ENCODE measurements at regions of chr6 and their contacts with region 1.

Region 1: DNA sequence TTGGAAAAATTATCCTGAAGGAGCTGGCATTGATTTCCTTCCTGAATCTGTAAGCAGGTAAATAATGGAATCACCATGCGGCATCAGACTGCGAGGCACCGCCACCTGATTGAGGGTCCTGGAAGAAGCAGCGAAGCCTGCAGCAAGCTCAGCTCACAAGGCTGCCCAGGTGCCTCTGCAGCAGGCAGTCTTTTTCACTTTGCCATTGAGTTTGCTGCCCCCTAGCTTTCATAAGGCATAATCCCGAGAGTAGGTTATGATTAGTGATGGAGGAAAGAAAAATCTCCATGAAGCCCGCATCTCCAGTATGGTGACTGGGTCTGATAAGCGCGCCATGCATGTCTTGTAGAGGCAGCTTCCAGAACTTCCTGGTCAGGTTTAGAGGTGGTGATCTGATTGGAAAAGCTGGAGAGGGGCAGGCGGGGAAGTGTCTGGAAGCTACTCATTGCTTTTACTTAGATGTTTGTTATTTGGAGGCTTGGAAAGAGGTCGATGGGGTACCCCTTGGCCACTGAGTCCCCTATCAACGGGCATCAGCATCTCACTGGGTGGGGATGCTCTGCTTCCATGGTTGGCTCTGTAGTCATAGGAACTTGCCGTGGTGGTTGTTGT is 26.7 kb downstream of the IYD start:
- DNase-seq: peak; percentile 75
- H3K4me3 Mint-ChIP-seq: no peak overlapping the region
- H3K27ac Mint-ChIP-seq: no peak overlapping the region
- H3K4me1 Mint-ChIP-seq: peaks cover 5% of the 10 kb centered on the region
- H3K27me3 Mint-ChIP-seq: no peaks in the 10 kb centered on the region
- CTCF ChIP-seq: peak; percentile 62

Region 2: DNA sequence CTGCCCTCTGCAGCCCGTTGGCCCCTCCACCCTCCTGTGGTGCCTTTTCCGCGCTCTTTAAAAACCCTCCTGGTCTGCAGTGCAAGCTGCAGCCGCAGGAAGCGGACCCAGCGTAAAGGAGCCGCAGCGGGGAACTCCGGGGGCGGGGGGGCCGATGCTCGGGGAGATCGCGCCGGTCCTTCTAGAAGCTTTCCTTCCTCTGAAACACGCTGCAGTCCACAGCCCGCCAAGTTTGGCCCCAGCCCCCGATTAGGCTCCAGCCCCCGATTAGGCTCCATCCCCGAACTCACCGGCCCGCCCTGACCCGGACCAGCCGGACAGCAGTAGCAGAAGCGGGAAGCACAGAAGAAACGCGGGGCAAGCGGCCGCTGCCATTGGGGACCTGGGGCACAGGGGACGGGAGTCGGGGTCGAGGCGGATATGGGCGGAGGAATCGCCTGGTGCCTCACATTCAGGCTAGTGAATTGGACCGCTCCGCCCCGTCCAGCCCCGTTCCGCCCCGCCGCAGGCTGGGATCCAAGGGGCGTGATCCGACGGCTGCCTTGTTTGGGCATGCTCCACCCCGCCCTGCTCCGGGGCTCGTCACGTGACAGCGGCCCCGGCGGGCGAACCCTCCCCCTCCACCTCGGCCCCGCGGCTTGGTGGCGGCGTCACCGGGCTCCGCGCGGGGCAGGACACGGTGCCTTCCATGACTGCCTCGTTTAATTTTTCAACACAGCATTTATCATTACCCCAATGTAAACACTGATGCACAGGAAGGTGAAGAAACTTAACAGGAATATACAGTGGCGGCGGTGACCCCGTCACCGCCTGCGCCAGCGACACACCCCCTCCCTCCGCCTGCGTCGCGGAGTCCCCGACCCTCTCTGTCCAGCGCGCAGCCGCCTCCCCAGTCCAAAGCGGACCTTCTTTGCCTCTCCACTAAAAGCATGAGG is 390.5 kb before region 1 on chr6:
- CTCF ChIA-PET with region 1: interaction called, 6 read pairs
- POLR2A ChIA-PET with region 1: no interaction called
- intact Hi-C with region 1: loop called (anchors 5 kb)
- DNase-seq: peak; percentile 91
- H3K4me3 Mint-ChIP-seq: peak overlapping the region; percentile 80
- H3K27ac Mint-ChIP-seq: no peak overlapping the region
- H3K4me1 Mint-ChIP-seq: peaks cover 17% of the 10 kb centered on the region
- H3K27me3 Mint-ChIP-seq: peaks cover 5% of the 10 kb centered on the region
- CTCF ChIP-seq: no peak

Region 3: DNA sequence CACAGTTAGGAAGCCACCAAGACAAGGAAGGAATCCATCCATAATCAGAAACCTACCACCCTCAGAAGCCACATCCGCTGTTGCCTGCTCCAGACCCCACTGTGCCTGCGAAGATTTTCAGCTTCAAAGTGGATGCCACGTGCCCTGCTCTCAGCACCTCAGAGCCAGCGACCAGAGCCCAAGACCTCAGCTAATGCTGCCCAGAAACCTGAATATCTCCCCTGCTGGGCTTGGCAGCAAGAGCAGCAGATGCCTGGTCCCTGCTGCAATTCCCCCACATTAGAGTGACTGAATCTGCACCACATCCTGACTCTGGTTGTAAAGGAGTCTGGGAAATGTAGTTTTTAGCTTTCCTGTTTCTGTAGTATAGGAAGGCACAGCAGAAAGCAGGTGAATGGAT is 315.9 kb before region 1 on chr6:
- CTCF ChIA-PET with region 1: interaction called, 207 read pairs
- POLR2A ChIA-PET with region 1: interaction called, 6 read pairs
- intact Hi-C with region 1: loop called (anchors 1 kb)
- DNase-seq: no peak
- H3K4me3 Mint-ChIP-seq: no peak overlapping the region
- H3K27ac Mint-ChIP-seq: no peak overlapping the region
- H3K4me1 Mint-ChIP-seq: peaks cover 6% of the 10 kb centered on the region
- H3K27me3 Mint-ChIP-seq: peaks cover 10% of the 10 kb centered on the region
- CTCF ChIP-seq: no peak

Region 4: DNA sequence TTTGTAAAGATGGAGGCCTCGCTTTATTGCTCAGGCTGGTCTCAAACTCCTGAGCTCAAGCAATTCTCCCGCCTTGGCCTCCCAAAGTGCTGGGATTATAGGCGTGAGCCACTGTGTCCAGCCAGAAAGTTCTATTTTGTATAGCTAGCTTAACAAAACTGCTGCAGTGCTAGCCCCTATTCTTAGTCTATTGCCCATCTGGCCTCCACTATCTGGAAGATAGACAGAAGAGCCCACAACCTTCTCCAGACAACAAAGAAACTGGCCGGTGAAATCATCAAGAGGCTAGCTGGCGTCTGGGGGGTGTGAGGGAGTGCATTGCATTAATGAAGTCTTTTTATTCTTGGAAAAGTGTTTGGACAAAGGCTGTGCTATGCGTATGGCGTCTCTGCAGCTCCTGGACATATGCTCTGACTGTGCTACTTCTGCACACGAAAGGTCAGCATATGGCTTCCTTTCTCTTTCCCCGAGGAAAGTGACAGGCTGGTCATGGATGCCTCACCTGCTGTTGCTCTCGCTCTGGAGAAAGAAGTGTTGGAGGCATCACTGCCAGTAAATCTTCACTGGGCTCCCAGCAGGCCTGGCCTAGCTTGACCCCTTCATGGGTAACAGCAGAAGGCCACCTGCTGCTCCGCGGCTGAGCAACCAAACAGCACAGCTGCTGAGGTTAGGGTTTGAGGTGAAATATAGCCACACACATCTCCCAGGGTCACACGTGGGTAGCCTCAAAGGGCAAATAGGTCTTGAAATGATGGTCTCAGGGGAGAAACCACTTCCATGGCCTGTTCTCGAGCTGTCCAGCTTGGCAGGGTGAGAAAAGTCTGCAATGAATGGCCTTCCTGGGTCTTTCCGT is 121.8 kb before region 1 on chr6:
- CTCF ChIA-PET with region 1: interaction called, 5 read pairs
- POLR2A ChIA-PET with region 1: no interaction called
- intact Hi-C with region 1: loop called (anchors 2 kb)
- DNase-seq: no peak
- H3K4me3 Mint-ChIP-seq: no peak overlapping the region
- H3K27ac Mint-ChIP-seq: no peak overlapping the region
- H3K4me1 Mint-ChIP-seq: peaks cover 35% of the 10 kb centered on the region
- H3K27me3 Mint-ChIP-seq: no peaks in the 10 kb centered on the region
- CTCF ChIP-seq: no peak

Region 5: GRCh38 chr6:150301846-150302519 is 93.5 kb before region 1 on chr6:
- CTCF ChIA-PET with region 1: no interaction called
- POLR2A ChIA-PET with region 1: no interaction called
- intact Hi-C with region 1: no loop called
- DNase-seq: peak; percentile 67
- H3K4me3 Mint-ChIP-seq: no peak overlapping the region
- H3K27ac Mint-ChIP-seq: peak overlapping the region; percentile 14
- H3K4me1 Mint-ChIP-seq: peaks cover 20% of the 10 kb centered on the region
- H3K27me3 Mint-ChIP-seq: no peaks in the 10 kb centered on the region
- CTCF ChIP-seq: no peak

Region 6: DNA sequence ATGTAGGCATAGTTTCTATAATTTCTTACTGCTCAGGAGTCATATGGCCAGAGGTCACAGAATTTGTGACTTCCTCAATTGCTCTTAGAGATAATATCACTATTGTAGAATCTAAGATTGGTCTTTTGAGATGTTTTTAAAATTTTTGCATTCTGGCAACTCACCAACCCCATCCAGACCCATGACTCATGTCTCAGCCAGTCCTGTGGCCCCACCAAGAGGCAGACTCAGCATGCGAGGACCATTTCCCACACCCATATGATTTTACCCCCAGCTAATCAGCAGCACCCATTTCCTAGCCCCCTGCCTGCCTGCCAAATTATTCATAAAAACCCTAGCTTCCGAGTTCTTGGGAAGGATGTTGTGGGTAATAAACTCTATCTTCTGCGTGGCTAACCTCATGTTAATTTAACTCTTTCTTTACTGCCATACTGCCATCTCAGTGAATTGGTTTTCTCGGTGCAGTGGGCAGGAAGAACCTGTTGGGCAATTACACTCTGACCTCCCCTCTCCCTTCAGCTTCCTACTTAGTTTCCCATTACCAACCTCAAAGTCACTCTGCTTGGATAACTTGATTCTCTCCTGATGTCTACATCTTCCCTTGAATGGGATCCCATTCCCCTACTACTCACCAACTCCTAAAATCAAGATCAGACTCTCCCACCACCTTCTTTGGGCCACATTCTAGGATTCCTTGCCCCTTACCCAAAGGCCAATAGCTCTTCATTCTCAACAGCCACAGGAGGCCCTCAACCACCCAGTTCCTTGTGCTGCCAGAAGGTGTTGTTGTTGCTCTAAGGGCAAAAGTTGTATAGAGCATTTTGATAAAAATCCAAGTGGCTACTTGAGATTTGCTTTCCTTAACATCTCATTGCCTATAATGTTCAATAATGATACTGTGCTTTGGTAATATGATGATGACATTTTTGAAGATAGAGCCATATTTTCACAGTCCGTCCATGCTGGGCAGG is 42.9 kb before region 1 on chr6:
- CTCF ChIA-PET with region 1: interaction called, 11 read pairs
- POLR2A ChIA-PET with region 1: no interaction called
- intact Hi-C with region 1: no loop called
- DNase-seq: peak; percentile 29
- H3K4me3 Mint-ChIP-seq: no peak overlapping the region
- H3K27ac Mint-ChIP-seq: no peak overlapping the region
- H3K4me1 Mint-ChIP-seq: peaks cover 8% of the 10 kb centered on the region
- H3K27me3 Mint-ChIP-seq: no peaks in the 10 kb centered on the region
- CTCF ChIP-seq: no peak

Region 7: DNA sequence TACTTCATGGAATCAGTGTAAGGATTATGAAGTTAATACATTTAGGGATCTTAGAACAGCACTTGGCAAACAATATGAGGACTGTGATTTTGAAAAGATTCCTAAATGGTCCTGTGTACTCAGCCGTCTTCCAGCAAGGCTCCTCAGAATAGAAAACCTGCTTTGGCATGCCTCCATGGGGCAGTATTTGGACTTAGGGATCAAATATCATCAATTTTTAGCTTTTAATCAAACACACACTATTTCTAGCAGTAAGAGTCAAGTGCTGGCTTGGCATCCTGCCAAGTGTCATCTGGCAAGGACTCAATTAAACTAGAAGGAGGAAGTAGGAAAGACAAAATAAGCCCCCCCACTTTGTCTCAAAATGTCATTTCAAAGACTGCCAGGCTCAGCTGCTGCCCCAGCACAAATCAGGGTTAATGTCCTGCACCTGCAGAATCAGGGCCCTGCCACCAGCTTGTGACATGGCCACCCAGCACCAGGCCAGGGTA is 14.1 kb after region 1 on chr6:
- CTCF ChIA-PET with region 1: interaction called, 29 read pairs
- POLR2A ChIA-PET with region 1: no interaction called
- intact Hi-C with region 1: no loop called
- DNase-seq: peak; percentile 24
- H3K4me3 Mint-ChIP-seq: no peak overlapping the region
- H3K27ac Mint-ChIP-seq: no peak overlapping the region
- H3K4me1 Mint-ChIP-seq: peaks cover 15% of the 10 kb centered on the region
- H3K27me3 Mint-ChIP-seq: no peaks in the 10 kb centered on the region
- CTCF ChIP-seq: no peak

Region 8: DNA sequence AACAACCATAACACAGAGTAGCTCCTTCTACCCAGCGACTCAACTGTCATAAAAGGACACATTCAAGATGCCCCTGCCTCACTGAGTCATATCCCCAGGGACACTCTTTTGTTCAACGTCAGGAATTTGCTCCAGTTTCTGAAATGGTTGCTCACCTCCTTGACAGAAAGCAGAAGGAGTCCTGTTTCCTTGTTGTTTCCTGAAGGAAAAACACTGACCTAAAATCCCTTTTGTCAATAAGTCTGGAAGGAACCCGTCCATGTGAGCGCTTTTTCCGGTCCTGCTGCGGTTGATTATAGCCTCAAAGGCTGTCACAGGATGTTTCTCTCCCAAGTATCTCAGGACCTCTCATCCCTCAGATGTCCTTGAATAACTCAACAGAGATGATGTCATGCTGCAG is 90.5 kb after region 1 on chr6:
- CTCF ChIA-PET with region 1: no interaction called
- POLR2A ChIA-PET with region 1: no interaction called
- intact Hi-C with region 1: no loop called
- DNase-seq: no peak
- H3K4me3 Mint-ChIP-seq: no peak overlapping the region
- H3K27ac Mint-ChIP-seq: no peak overlapping the region
- H3K4me1 Mint-ChIP-seq: no peaks in the 10 kb centered on the region
- H3K27me3 Mint-ChIP-seq: no peaks in the 10 kb centered on the region
- CTCF ChIP-seq: no peak